ENCODE measurements at regions of chr7 and their contacts with region 1.

Region 1: DNA sequence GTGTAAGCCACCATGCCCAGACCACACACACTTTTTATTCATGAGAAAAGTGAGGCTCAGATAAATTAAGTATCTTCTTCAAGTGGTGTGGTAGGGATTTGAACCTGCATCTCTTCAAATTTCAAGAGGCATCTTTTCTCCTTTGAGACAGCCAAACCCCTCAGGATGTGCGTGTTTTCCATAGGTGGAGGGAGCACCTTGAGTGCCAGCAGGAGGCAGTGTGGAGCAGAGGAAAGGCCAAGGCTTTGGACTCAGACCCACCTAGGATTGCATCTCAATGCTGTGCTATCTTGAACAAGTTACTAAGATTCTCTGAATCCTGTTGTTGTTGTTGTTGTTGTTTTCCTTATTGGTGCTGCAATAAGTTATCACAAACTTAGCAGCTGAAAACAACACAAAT is 40.2 kb upstream of the MYL10 start:
- DNase-seq: no peak
- H3K4me3 ChIP-seq: no peak overlapping the region
- H3K27ac ChIP-seq: no peak overlapping the region
- H3K4me1 ChIP-seq: no peaks in the 10 kb centered on the region
- H3K27me3 ChIP-seq: peaks cover 2% of the 10 kb centered on the region
- CTCF ChIP-seq: peak in 1 of 2 donors; percentile 12

Region 2: DNA sequence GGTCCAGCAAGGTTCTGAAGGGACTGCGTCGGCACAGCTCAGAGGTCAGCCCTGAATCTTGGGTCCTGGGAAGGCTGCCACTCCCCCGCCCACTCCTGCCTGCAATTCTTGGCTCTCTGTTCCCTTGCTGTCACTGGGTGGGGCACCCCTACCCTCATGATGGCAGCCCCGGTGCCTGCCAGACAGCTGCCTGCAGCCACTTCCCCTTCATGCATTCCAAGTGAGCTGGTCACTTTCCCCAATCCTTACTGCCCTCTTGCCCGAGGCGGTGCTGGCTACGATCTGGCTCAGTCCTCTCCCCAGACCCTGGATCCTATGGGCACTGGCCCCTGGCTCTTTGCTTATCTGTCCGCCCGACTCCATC is 54.4 kb before region 1 on chr7:
- CTCF ChIA-PET with region 1: no interaction called
- dilution Hi-C with region 1: loop called (anchors 5 kb)
- in situ Hi-C with region 1: no loop called
- intact Hi-C with region 1: no loop called
- DNase-seq: peak; percentile 45
- H3K4me3 ChIP-seq: no peak overlapping the region
- H3K27ac ChIP-seq: no peak overlapping the region
- H3K4me1 ChIP-seq: peaks cover 10% of the 10 kb centered on the region
- H3K27me3 ChIP-seq: no peaks in the 10 kb centered on the region
- CTCF ChIP-seq: no peak

Measured in mammary epithelial cell (primary cell).